ENCODE measurements at regions of chr12 and their contacts with region 1.

Region 1: GRCh38 chr12:56636675-56637540 is 6.8 kb upstream of the BAZ2A start:
- DNase-seq: peak; percentile 95
- ATAC-seq: peak; percentile 64
- H3K4me3 Mint-ChIP-seq: peak overlapping the region; percentile 96
- H3K27ac Mint-ChIP-seq: peak overlapping the region; percentile 97
- H3K4me1 Mint-ChIP-seq: peaks cover 64% of the 10 kb centered on the region
- H3K27me3 Mint-ChIP-seq: no peaks in the 10 kb centered on the region
- CTCF ChIP-seq: no peak

Region 2: DNA sequence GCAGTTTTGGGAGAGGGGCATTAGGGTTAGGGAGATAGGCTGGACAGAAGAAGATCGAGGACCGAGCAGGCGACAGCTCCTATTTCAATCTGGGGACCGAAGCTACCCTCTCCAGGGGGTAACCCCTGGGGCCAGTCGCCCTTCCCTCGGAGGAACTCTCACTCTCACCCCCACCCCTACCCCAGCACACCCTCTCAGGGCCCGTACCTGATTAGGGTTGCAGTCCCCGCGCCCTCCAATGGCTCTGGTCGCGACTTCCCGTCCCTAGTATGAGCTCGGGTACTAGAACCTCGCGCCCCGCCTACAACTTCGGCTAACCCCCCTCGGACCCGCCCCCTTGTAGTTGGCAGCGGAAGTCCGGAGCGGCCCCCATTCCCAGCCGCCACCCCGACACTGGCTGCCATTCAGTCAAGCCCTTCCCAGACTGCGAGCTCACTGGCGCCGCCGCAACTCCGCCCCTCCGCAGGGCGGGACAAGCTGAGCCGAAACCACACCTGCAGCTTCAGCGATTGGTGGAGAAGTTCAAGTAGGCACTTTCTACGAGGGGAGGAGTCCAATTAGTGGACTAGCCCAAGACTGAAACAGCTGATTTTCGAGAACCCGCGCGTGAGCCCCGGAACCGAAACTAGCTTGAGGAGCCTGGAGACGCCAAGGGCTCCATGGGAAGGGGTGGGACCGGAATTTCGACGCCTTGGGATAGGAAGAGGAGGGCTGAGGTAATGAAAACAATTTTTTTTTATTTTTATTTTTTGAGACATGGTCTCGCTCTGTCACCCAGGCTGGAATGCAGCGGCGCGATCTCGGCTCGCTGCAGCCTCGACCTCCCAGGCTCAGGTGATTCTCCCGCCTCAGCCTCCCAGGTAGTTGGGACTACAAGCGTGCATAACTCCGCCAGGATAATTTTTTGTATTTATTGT is 276.8 kb before region 1 on chr12 and contains the start of gene STAT2:
- CTCF ChIA-PET with region 1: interaction called, 3 read pairs
- POLR2A ChIA-PET with region 1: interaction called, 3 read pairs
- intact Hi-C with region 1: loop called (anchors 10 kb)
- DNase-seq: peak; percentile 98
- ATAC-seq: peak; percentile 94
- H3K4me3 Mint-ChIP-seq: peak within 1 kb of the TSS; percentile 92
- H3K27ac Mint-ChIP-seq: peak within 1 kb of the TSS; percentile 94
- H3K4me1 Mint-ChIP-seq: peaks cover 36% of the 10 kb centered on the region
- H3K27me3 Mint-ChIP-seq: no peaks in the 10 kb centered on the region
- CTCF ChIP-seq: no peak
- total RNA-seq, gene STAT2: 159 and 177 TPM in 2 replicates

Region 3: GRCh38 chr12:56529290-56530055 is 107.4 kb before region 1 on chr12:
- CTCF ChIA-PET with region 1: no interaction called
- POLR2A ChIA-PET with region 1: no interaction called
- intact Hi-C with region 1: no loop called
- DNase-seq: no peak
- ATAC-seq: no peak
- H3K4me3 Mint-ChIP-seq: no peak overlapping the region
- H3K27ac Mint-ChIP-seq: no peak overlapping the region
- H3K4me1 Mint-ChIP-seq: no peaks in the 10 kb centered on the region
- H3K27me3 Mint-ChIP-seq: no peaks in the 10 kb centered on the region
- CTCF ChIP-seq: no peak

Region 4: GRCh38 chr12:56657416-56658379 is 20.8 kb after region 1 on chr12:
- CTCF ChIA-PET with region 1: interaction called, 16 read pairs
- POLR2A ChIA-PET with region 1: interaction called, 96 read pairs
- intact Hi-C with region 1: loop called (anchors 1 kb)
- DNase-seq: no peak
- ATAC-seq: peak; percentile 73
- H3K4me3 Mint-ChIP-seq: peak overlapping the region; percentile 64
- H3K27ac Mint-ChIP-seq: peak overlapping the region; percentile 89
- H3K4me1 Mint-ChIP-seq: peaks cover 35% of the 10 kb centered on the region
- H3K27me3 Mint-ChIP-seq: no peaks in the 10 kb centered on the region
- CTCF ChIP-seq: no peak

Region 5: GRCh38 chr12:56695327-56696101 is 58.6 kb after region 1 on chr12:
- CTCF ChIA-PET with region 1: no interaction called
- POLR2A ChIA-PET with region 1: interaction called, 70 read pairs
- intact Hi-C with region 1: no loop called
- DNase-seq: no peak
- ATAC-seq: no peak
- H3K4me3 Mint-ChIP-seq: no peak overlapping the region
- H3K27ac Mint-ChIP-seq: no peak overlapping the region
- H3K4me1 Mint-ChIP-seq: peaks cover under 1% of the 10 kb centered on the region
- H3K27me3 Mint-ChIP-seq: no peaks in the 10 kb centered on the region
- CTCF ChIP-seq: no peak

Region 6: GRCh38 chr12:56897844-56898361 is 261.0 kb after region 1 on chr12:
- CTCF ChIA-PET with region 1: no interaction called
- POLR2A ChIA-PET with region 1: no interaction called
- intact Hi-C with region 1: no loop called
- DNase-seq: no peak
- ATAC-seq: no peak
- H3K4me3 Mint-ChIP-seq: no peak overlapping the region
- H3K27ac Mint-ChIP-seq: no peak overlapping the region
- H3K4me1 Mint-ChIP-seq: no peaks in the 10 kb centered on the region
- H3K27me3 Mint-ChIP-seq: no peaks in the 10 kb centered on the region
- CTCF ChIP-seq: no peak

Region 7: DNA sequence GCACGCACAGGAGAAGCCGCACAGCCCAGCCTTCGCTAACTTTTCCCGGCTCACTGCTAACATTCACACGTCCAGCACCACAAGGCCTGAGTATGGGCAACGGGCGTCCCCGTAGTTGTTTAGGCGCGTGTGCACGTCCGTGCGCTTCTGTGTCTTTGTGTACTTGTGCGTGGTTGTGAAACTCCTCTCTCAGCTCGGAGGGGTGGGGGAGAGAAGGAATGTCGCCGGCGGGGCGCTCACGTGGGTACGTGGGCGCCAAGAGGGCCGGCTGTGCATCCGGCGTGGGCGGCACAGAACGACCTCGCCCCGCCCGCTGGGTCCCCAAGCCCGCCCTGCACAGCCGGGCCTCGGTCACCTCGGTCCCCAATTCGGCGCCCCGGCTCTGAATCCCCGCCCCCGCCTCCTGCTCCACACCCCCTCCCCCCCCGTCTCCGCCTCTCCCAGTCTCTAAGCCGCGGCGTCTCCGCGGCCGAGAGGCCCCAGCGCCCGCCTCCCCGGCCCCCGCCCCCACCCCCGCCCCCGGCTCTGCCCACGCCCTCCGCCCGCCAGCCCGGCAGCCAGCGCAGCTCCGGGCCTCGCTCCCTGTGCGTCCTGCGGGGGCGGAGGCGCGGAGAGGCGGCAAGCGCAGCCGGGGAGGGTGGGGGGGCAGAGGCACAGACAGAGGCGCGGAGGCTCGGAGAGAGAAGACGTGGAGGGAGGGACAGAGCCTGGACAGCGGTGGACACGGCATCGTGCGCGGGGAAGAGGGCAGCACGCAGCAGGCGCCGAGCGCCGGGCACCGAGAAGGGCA is 451.7 kb after region 1 on chr12 and contains the start of gene NAB2:
- CTCF ChIA-PET with region 1: no interaction called
- POLR2A ChIA-PET with region 1: no interaction called
- intact Hi-C with region 1: loop called (anchors 2 kb)
- DNase-seq: peak; percentile 89
- ATAC-seq: peak; percentile 66
- H3K4me3 Mint-ChIP-seq: peak within 1 kb of the TSS; percentile 91
- H3K27ac Mint-ChIP-seq: peak within 1 kb of the TSS; percentile 96
- H3K4me1 Mint-ChIP-seq: peaks cover 55% of the 10 kb centered on the region
- H3K27me3 Mint-ChIP-seq: no peaks in the 10 kb centered on the region
- CTCF ChIP-seq: no peak
- total RNA-seq, gene NAB2: 20.4 and 22.1 TPM in 2 replicates